ENCODE measurements at regions of chr20 and their contacts with region 1.

Region 1: GRCh38 chr20:39813190-39813829 is 851.2 kb downstream of the DHX35 start:
- DNase-seq: no peak
- ATAC-seq: no peak
- H3K4me3 ChIP-seq: no peak overlapping the region
- H3K27ac ChIP-seq: no peak overlapping the region
- H3K4me1 ChIP-seq: no peaks in the 10 kb centered on the region
- H3K27me3 ChIP-seq: no peaks in the 10 kb centered on the region
- CTCF ChIP-seq: no peak
- POLR2A ChIP-seq: no peak

Region 2: GRCh38 chr20:39503902-39504709 is 309.2 kb before region 1 on chr20:
- intact Hi-C with region 1: no loop called
- DNase-seq: no peak
- ATAC-seq: no peak
- H3K4me3 ChIP-seq: no peak overlapping the region
- H3K27ac ChIP-seq: no peak overlapping the region
- H3K4me1 ChIP-seq: no peaks in the 10 kb centered on the region
- H3K27me3 ChIP-seq: no peaks in the 10 kb centered on the region
- CTCF ChIP-seq: no peak
- POLR2A ChIP-seq: no peak

Region 3: GRCh38 chr20:39874049-39874888 is 61.0 kb after region 1 on chr20:
- intact Hi-C with region 1: loop called (anchors 10 kb)
- DNase-seq: peak; percentile 54 to 76 (median 66)
- ATAC-seq: peak; percentile 78
- H3K4me3 ChIP-seq: no peak overlapping the region
- H3K27ac ChIP-seq: no peak overlapping the region
- H3K4me1 ChIP-seq: no peaks in the 10 kb centered on the region
- H3K27me3 ChIP-seq: no peaks in the 10 kb centered on the region
- CTCF ChIP-seq: peak; percentile 43 to 68 (median 55)
- POLR2A ChIP-seq: no peak

Measured in body of pancreas (tissue), 4 donors.